ENCODE measurements at regions of chr7 and their contacts with region 1.

Region 1: DNA sequence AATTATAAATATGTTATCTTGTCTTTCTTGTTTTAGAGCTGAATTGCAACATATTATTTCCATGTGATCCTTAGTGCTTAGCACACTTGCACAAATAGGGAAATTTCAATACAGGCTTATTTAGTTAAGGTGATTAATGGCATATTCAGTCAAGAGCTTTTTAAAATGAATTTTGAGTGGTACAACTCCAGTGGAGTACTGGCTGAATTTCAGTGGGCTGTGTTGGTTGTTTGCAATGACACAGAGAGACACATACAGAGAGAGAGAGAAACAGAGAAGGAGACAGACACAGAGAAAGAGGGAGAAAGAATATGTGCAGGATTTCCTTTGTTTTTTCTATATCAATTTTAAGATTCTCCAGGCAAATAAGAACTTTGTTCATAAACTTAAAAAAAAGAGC is 766.9 kb downstream of the DNAJB9 start:
- DNase-seq: no peak

Region 2: GRCh38 chr7:109391240-109391639 is 54.7 kb after region 1 on chr7:
- intact Hi-C with region 1: loop called (anchors 10 kb)
- DNase-seq: no peak